Heart left ventricle (tissue), 16 donors: ENCODE measurements at regions of chr12 and their contacts with region 1.

Region 1: GRCh38 chr12:91065396-91065795 is 7.6 kb upstream of the KERA start:
- DNase-seq: no peak
- ATAC-seq: no peak
- H3K4me3 ChIP-seq: no peak overlapping the region
- H3K27ac ChIP-seq: no peak overlapping the region
- H3K4me1 ChIP-seq: no peaks in the 10 kb centered on the region
- H3K27me3 ChIP-seq: no peaks in the 10 kb centered on the region
- CTCF ChIP-seq: no peak
- POLR2A ChIP-seq: no peak

Region 2: DNA sequence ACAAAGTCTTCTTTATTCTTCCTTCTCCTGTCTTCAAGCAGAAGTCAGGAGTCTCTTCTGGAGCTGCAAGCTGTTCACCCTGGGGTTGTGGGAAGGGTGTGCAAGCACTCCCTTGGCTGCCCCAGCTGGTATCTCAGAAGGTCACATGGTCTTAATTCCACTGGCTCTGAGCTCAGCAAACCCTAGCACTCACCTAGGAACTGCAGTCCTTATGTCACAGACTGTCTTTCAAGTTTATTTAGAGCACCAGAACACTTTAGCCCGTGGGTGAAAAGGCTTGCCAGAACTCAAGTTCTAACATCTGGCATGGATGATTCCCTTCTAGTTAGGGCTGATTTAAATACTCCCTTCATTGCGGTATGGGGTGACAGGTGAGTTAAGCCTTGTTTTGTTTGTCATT is 489.4 kb before region 1 on chr12:
- intact Hi-C with region 1: no loop called
- DNase-seq: peak in 1 of 5 donors; percentile 55
- ATAC-seq: peak in 3 of 4 donors; percentile 55 to 96 (median 78)
- H3K4me3 ChIP-seq: peak overlapping the region in 2 of 12 donors; percentile 25 to 49
- H3K27ac ChIP-seq: peak overlapping the region in 1 of 12 donors; percentile 75
- H3K4me1 ChIP-seq: no peaks in the 10 kb centered on the region
- H3K27me3 ChIP-seq: no peaks in the 10 kb centered on the region
- CTCF ChIP-seq: no peak
- POLR2A ChIP-seq: no peak

Region 3: GRCh38 chr12:91040096-91040755 is 25.2 kb before region 1 on chr12:
- intact Hi-C with region 1: no loop called
- DNase-seq: no peak
- ATAC-seq: no peak
- H3K4me3 ChIP-seq: no peak overlapping the region
- H3K27ac ChIP-seq: no peak overlapping the region
- H3K4me1 ChIP-seq: no peaks in the 10 kb centered on the region
- H3K27me3 ChIP-seq: no peaks in the 10 kb centered on the region
- CTCF ChIP-seq: no peak
- POLR2A ChIP-seq: no peak

Region 4: GRCh38 chr12:91127751-91128150 is 62.4 kb after region 1 on chr12:
- intact Hi-C with region 1: loop called in 1 of 10 experiments (anchors 10 kb)
- DNase-seq: no peak
- ATAC-seq: no peak
- H3K4me3 ChIP-seq: no peak overlapping the region
- H3K27ac ChIP-seq: no peak overlapping the region
- H3K4me1 ChIP-seq: peaks cover 0 to 8% (median 0%) of the 10 kb centered on the region in 12 donors
- H3K27me3 ChIP-seq: no peaks in the 10 kb centered on the region
- CTCF ChIP-seq: no peak
- POLR2A ChIP-seq: no peak